BJ (cell line): ENCODE measurements at regions of chr14 and their contacts with region 1.

Region 1: GRCh38 chr14:33792720-33793368 is 158.0 kb downstream of the EGLN3 start:
- DNase-seq: peak; percentile 35
- H3K4me3 ChIP-seq: no peak overlapping the region
- H3K27me3 ChIP-seq: peaks cover 4% of the 10 kb centered on the region; the same call in 1 of the 2 replicates
- CTCF ChIP-seq: peak; percentile 95

Region 2: DNA sequence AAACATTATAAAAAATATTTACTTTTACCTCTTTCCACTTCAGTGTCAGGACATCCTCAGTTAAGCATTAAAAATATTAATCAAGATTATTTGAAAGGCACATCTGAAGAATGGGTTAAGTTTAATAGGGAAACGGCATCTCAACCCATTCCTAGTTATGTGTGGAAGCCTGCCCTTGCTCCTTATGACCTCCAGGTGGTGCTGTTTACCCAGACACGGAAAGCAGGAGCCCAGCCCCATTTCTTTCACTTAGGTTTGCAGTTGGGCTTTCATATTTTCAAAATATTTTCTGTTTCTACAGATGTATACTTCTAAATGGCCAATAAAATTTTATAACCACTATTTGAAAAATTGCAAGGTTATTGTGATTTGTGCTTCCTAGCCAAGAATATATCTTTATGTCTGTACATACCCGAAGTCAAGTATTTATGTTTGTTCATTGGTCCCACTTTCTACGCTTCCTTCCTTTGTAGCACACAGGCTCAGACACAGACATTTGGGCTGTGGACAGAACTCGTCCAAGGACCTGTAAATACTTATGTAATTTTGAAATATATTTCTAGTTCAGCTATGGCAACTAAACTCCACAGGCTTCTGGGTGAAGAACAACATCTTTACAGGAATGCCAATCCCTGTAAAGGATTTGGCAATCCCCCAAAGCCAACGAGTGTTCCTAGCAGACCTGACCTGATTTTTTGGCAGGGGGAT is 1216.6 kb before region 1 on chr14:
- CTCF ChIA-PET with region 1: interaction called, 10 read pairs
- POLR2A ChIA-PET with region 1: no interaction called
- DNase-seq: no peak
- H3K4me3 ChIP-seq: no peak overlapping the region
- H3K27me3 ChIP-seq: no peaks in the 10 kb centered on the region
- CTCF ChIP-seq: peak; percentile 94

Region 3: DNA sequence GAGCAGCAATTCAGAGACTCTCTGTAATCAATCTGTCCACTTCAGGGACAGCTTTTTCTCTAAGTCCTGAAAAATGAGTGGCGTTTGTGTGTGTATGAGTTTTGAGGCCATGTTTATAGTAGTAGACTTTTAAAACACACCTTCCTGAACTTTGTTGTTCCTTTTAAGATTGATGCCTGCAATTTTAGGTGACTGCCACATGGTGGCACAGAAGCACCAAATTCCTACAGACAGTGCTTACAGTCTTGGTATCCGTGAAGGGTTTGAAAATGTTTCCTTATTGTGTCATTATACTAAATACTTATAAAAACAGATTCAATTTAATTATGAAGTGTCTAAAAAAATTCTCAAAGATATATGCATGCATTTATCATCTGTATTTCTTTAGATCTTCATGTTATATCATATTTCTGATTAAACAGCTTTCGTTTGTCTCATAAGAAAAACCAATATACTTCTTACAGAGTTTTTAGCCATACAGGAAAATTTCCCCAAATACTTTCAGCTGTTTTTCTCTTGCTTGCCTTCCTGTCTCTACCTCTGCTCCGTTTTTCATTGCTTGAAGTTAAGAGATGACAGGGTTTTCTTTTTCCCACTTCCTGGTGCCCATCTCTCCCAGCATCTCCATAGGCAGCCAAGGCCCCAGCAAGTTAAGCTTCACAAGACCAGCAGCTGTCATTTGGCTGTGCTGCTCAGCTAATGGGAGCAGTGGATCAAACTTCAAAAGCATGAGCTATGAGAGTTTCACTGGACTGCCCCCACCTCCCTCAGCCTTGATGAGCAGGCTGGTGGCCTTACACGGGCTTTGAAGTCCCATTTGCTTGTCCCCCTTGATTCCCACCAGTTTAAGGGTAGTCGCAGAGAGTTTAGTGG is 1204.2 kb before region 1 on chr14:
- CTCF ChIA-PET with region 1: interaction called, 10 read pairs
- POLR2A ChIA-PET with region 1: no interaction called
- DNase-seq: no peak
- H3K4me3 ChIP-seq: no peak overlapping the region
- H3K27me3 ChIP-seq: no peaks in the 10 kb centered on the region; the same call in 1 of the 2 replicates
- CTCF ChIP-seq: peak; percentile 68

Region 4: GRCh38 chr14:33676135-33676566 is 116.7 kb before region 1 on chr14:
- CTCF ChIA-PET with region 1: interaction called, 11 read pairs
- POLR2A ChIA-PET with region 1: no interaction called
- DNase-seq: no peak
- H3K4me3 ChIP-seq: no peak overlapping the region
- H3K27me3 ChIP-seq: no peaks in the 10 kb centered on the region
- CTCF ChIP-seq: peak; percentile 54

Region 5: DNA sequence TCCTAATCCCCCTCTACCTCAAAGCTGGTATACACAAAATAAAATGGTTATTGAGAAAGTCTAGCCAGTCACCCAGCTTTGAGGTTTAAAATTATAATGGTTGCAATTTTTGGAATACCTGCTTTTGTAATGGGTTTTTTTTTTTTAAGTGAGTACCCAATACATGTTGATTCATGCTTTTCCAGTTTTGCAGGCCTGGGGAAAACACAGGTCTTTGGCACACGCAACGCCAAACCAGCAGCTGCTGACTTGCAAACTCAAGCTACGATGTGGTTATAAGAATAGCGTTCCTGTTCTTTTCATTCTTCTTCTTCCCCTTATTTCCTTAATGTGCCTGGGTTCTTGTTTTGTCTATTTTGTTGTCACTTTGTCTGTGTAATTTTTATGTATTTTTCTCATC is 75.0 kb before region 1 on chr14:
- CTCF ChIA-PET with region 1: no interaction called
- POLR2A ChIA-PET with region 1: no interaction called
- DNase-seq: no peak
- H3K4me3 ChIP-seq: no peak overlapping the region
- H3K27me3 ChIP-seq: 0 out of 2 replicates have a peak, but pooled peaks cover 1% of the 10 kb centered on the region
- CTCF ChIP-seq: no peak

Region 6: GRCh38 chr14:33805593-33805992 is 12.7 kb after region 1 on chr14:
- CTCF ChIA-PET with region 1: interaction called, 22 read pairs
- POLR2A ChIA-PET with region 1: interaction called, 10 read pairs
- DNase-seq: no peak
- H3K4me3 ChIP-seq: no peak overlapping the region
- H3K27me3 ChIP-seq: peaks cover 4% of the 10 kb centered on the region
- CTCF ChIP-seq: no peak

Region 7: GRCh38 chr14:33836203-33836899 is 43.5 kb after region 1 on chr14:
- CTCF ChIA-PET with region 1: no interaction called
- POLR2A ChIA-PET with region 1: no interaction called
- DNase-seq: no peak
- H3K4me3 ChIP-seq: no peak overlapping the region
- H3K27me3 ChIP-seq: peaks cover 3% of the 10 kb centered on the region; the same call in 1 of the 2 replicates
- CTCF ChIP-seq: no peak

Region 8: GRCh38 chr14:33996462-33996861 is 203.6 kb after region 1 on chr14:
- CTCF ChIA-PET with region 1: no interaction called
- POLR2A ChIA-PET with region 1: no interaction called
- DNase-seq: no peak
- H3K4me3 ChIP-seq: no peak overlapping the region
- H3K27me3 ChIP-seq: no peaks in the 10 kb centered on the region; the same call in none of the 2 replicates
- CTCF ChIP-seq: no peak

Region 9: DNA sequence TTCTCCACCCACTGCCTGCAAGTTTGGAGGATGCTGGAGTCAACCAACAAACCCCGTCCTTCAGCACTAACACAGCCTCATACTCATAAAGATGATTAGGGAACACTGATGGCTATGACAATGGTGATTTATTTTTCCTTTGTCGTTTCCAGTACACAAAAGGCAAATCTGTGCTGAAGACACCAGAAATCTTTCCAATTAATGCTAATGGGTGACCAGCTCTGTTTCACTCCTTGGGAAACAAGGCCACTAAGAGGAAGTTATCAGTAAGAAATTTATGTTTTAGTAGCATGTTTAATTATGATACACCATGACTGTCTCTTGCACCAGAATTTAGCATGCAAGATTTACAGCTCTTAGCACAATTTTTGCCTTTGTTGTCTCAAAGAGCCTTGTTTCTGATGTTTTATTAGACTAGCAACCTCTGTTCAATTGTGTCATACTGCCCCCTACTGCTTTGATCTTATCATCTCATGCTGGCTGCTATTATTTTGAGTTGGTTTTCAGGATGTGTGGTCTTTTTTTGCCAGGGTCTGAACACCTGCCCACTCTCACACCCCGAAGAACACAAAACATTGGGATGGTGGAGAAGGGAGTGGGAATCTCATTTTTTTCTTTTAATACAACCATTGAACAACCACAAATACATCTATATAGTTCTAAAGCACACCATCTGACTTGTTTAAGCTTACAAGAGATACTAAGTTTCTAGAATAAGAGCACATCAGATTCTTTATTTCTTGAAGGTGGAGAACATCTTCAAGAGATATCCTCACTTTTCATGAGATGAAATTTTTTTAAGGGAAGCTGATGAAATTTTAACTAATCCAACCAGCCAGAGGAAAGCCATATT is 508.3 kb after region 1 on chr14:
- CTCF ChIA-PET with region 1: interaction called, 10 read pairs
- POLR2A ChIA-PET with region 1: no interaction called
- DNase-seq: no peak
- H3K4me3 ChIP-seq: no peak overlapping the region
- H3K27me3 ChIP-seq: no peaks in the 10 kb centered on the region
- CTCF ChIP-seq: peak; percentile 55